Activated CD4-positive, alpha-beta T cell treated with anti-CD3 and anti-CD28 coated beads for 36 hours (primary cell): ENCODE measurements at regions of chr3 and their contacts with region 1.

Region 1: DNA sequence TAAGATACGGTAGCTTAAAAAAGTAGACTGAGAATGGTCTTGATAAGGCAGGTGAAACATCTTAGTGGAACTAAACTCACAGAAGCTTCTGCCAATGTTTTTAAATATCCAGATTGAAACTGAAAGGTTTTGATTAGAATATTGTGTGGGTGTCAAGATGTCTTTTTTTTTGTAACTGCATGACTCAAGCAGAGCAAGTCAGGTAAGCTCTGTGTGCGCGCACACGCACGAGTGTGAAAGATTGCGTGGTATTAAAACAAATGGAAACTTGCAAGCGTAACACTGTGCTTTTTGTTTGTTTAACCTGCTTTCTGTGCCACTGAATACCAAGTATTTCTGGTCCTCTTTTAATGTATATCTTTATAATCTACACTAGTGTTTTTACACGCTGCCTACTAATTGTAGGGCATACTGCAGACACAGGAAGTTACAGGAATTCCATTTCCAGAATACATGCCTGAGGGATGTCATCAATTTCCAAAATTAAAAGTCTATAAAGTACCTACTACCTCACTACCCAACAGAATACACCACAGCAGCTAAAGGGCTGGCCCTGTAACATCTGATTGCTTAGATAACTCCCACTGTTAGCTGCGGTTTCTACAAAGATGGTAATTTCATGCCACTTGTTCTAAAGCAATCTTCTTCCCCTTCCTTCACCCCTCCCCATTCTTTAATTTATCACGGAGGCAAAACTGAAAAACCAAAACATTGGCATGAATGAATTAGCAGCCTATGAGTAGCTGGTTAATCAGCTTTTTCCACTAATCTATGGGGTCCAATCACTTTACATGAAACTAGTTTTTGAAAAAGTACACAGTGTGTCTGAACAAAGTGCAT is 472.8 kb downstream of the SHQ1 start:
- DNase-seq: peak; percentile 75
- ATAC-seq: peak; percentile 83
- H3K4me3 Mint-ChIP-seq: peak overlapping the region; percentile 36
- H3K27ac Mint-ChIP-seq: peak overlapping the region; percentile 88
- H3K4me1 Mint-ChIP-seq: peaks cover 68% of the 10 kb centered on the region
- H3K27me3 Mint-ChIP-seq: no peaks in the 10 kb centered on the region

Region 2: GRCh38 chr3:71978150-71978721 is 397.2 kb before region 1 on chr3:
- CTCF ChIA-PET with region 1: no interaction called
- POLR2A ChIA-PET with region 1: no interaction called
- intact Hi-C with region 1: loop called in 1 of 2 experiments (anchors 1 kb)
- DNase-seq: peak; percentile 67
- ATAC-seq: peak; percentile 87
- H3K4me3 Mint-ChIP-seq: peak overlapping the region; percentile 44
- H3K27ac Mint-ChIP-seq: peak overlapping the region; percentile 81
- H3K4me1 Mint-ChIP-seq: peaks cover 47% of the 10 kb centered on the region
- H3K27me3 Mint-ChIP-seq: peaks cover 13% of the 10 kb centered on the region

Region 3: GRCh38 chr3:72405943-72406566 is 30.6 kb after region 1 on chr3:
- CTCF ChIA-PET with region 1: interaction called, 3 read pairs
- POLR2A ChIA-PET with region 1: no interaction called
- intact Hi-C with region 1: loop called in 1 of 2 experiments (anchors 2 kb)
- DNase-seq: no peak
- ATAC-seq: no peak
- H3K4me3 Mint-ChIP-seq: no peak overlapping the region
- H3K27ac Mint-ChIP-seq: no peak overlapping the region
- H3K4me1 Mint-ChIP-seq: peaks cover 85% of the 10 kb centered on the region
- H3K27me3 Mint-ChIP-seq: no peaks in the 10 kb centered on the region

Region 4: GRCh38 chr3:72447059-72447946 is 71.8 kb after region 1 on chr3:
- CTCF ChIA-PET with region 1: no interaction called
- POLR2A ChIA-PET with region 1: no interaction called
- intact Hi-C with region 1: loop called (anchors 1 to 2 kb)
- DNase-seq: peak; percentile 96
- ATAC-seq: peak; percentile 87
- H3K4me3 Mint-ChIP-seq: peak overlapping the region; percentile 43
- H3K27ac Mint-ChIP-seq: peak overlapping the region; percentile 63
- H3K4me1 Mint-ChIP-seq: peaks cover 38% of the 10 kb centered on the region
- H3K27me3 Mint-ChIP-seq: peaks cover 13% of the 10 kb centered on the region

Region 5: DNA sequence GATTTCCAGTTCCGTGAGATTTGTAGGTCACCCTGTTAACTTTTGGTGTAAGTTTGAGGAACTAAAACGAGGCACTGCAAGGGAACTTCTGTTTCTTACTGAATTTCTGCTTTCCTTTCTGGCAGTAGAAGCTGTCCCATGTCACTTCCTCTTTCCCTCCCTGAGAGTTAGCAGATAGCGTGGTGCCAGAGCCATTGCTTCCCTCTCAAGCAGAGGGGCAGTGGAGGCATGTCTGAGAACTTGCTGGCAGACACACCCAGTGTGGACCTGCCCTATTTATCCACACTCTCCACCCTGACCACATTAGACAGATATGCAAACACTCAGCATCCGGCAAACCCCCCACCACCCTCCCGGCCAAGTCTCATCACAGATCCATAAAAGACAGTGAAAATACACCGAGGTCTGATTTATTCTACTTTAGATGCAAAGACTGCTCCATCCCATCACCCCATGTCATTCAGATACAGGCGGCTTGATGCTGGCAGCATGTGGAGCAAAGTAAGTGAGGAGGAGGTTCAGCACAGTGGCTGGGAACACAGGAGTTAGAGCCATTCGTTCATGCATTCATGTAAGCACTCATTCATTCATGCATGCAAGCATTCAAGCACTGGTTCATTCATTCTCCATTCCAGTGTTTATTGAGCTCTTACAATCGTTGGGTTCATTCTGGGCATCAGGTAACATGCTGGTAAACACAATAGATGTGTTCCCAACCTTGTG is 148.1 kb after region 1 on chr3:
- CTCF ChIA-PET with region 1: no interaction called
- POLR2A ChIA-PET with region 1: interaction called, 3 read pairs
- intact Hi-C with region 1: loop called in 1 of 2 experiments (anchors 1 kb)
- DNase-seq: no peak
- ATAC-seq: no peak
- H3K4me3 Mint-ChIP-seq: no peak overlapping the region
- H3K27ac Mint-ChIP-seq: peak overlapping the region; percentile 55
- H3K4me1 Mint-ChIP-seq: peaks cover 45% of the 10 kb centered on the region
- H3K27me3 Mint-ChIP-seq: no peaks in the 10 kb centered on the region